ENCODE measurements at regions of chr9 and their contacts with region 1.

Region 1: DNA sequence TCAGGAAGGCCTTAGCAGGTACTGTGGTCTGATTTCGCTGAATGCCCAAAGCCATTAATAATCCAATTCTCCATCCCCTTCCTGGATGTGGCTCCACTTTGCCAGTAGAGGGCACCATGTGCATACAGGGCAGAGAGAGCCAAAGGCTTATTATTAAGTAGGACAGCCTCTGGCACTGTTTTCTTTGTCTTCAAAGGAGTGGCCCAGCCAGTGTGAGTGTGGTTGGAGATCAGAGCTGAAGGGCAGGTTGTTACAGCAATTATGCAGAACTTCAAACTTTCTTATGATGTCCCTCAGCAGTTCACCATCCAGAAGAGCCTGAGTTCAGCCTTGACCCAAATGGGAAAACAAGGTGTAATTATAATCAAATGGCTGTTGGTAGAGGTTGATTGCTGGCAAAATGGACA is 38.6 kb upstream of the CEMIP2 start:
- DNase-seq: peak; percentile 62
- H3K4me3 ChIP-seq: no peak overlapping the region
- H3K27ac ChIP-seq: no peak overlapping the region
- H3K4me1 ChIP-seq: no peaks in the 10 kb centered on the region
- H3K27me3 ChIP-seq: no peaks in the 10 kb centered on the region
- CTCF ChIP-seq: peak; percentile 75 to 87 (median 83)
- EP300 ChIP-seq: no peak
- POLR2A ChIP-seq: no peak

Region 2: GRCh38 chr9:71285191-71285656 is 521.7 kb before region 1 on chr9:
- in situ Hi-C with region 1: loop called in 3 of 4 experiments (anchors 25 kb)
- intact Hi-C with region 1: no loop called
- DNase-seq: peak; percentile 11
- H3K4me3 ChIP-seq: no peak overlapping the region
- H3K27ac ChIP-seq: no peak overlapping the region
- H3K4me1 ChIP-seq: no peaks in the 10 kb centered on the region
- H3K27me3 ChIP-seq: no peaks in the 10 kb centered on the region
- CTCF ChIP-seq: peak; percentile 73 to 84 (median 78)
- EP300 ChIP-seq: no peak
- POLR2A ChIP-seq: no peak

Region 3: DNA sequence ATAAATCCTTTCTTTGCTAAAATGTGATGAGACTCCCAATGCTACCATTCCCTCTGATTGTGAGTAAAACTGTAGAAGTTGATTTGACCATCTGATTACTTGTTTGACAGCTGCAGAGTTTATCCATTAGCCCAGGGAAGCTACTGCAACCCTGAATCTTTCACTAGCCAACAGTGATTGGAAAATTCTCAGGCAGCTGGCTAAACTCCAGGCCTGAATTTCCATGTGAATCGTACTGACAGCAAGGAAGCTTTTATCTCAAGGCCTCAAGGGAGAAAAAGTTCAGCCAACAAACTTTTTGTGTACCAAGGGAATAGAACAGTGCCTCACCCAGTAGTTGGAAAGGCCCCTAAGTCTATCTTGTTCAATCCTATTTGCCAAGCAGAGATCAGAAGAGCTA is 438.7 kb before region 1 on chr9:
- in situ Hi-C with region 1: no loop called
- intact Hi-C with region 1: no loop called
- DNase-seq: peak; percentile 22
- H3K4me3 ChIP-seq: no peak overlapping the region
- H3K27ac ChIP-seq: no peak overlapping the region
- H3K4me1 ChIP-seq: peaks cover 0 to 14% (median 0%) of the 10 kb centered on the region in 4 donors
- H3K27me3 ChIP-seq: no peaks in the 10 kb centered on the region
- CTCF ChIP-seq: no peak
- EP300 ChIP-seq: no peak
- POLR2A ChIP-seq: no peak

Region 4: DNA sequence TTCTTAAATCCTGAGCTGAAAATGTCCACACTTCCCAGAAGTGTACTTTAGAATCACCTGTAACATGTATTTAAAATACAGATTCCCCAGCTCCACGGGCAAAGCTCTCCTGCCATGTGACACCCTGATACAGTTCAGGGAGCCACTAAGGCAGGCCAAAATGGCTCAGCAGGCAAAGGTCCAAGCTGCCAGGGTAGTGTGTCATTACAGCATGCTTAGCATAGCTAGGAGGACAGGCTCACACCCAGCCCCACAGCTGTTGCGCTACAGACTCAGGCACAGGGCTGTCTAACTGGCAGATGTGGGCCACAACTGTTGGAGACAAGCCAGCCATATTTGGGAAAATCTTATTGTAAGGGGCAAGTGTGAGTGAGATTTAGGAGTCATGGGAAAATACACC is 177.5 kb after region 1 on chr9:
- in situ Hi-C with region 1: loop called in 1 of 4 experiments (anchors 25 kb)
- intact Hi-C with region 1: no loop called
- DNase-seq: peak; percentile 25
- H3K4me3 ChIP-seq: no peak overlapping the region
- H3K27ac ChIP-seq: peak overlapping the region; percentile 1 to 73 (median 44)
- H3K4me1 ChIP-seq: peaks cover 0 to 10% (median 5%) of the 10 kb centered on the region in 4 donors
- H3K27me3 ChIP-seq: no peaks in the 10 kb centered on the region
- CTCF ChIP-seq: no peak
- EP300 ChIP-seq: no peak
- POLR2A ChIP-seq: no peak

Region 5: GRCh38 chr9:72022841-72023240 is 215.9 kb after region 1 on chr9:
- in situ Hi-C with region 1: loop called in 1 of 4 experiments (anchors 25 kb)
- intact Hi-C with region 1: loop called (anchors 5 kb)
- DNase-seq: peak; percentile 25
- H3K4me3 ChIP-seq: no peak overlapping the region
- H3K27ac ChIP-seq: no peak overlapping the region
- H3K4me1 ChIP-seq: peaks cover 0 to 7% (median 3%) of the 10 kb centered on the region in 4 donors
- H3K27me3 ChIP-seq: no peaks in the 10 kb centered on the region
- CTCF ChIP-seq: no peak
- EP300 ChIP-seq: no peak
- POLR2A ChIP-seq: no peak

Region 6: DNA sequence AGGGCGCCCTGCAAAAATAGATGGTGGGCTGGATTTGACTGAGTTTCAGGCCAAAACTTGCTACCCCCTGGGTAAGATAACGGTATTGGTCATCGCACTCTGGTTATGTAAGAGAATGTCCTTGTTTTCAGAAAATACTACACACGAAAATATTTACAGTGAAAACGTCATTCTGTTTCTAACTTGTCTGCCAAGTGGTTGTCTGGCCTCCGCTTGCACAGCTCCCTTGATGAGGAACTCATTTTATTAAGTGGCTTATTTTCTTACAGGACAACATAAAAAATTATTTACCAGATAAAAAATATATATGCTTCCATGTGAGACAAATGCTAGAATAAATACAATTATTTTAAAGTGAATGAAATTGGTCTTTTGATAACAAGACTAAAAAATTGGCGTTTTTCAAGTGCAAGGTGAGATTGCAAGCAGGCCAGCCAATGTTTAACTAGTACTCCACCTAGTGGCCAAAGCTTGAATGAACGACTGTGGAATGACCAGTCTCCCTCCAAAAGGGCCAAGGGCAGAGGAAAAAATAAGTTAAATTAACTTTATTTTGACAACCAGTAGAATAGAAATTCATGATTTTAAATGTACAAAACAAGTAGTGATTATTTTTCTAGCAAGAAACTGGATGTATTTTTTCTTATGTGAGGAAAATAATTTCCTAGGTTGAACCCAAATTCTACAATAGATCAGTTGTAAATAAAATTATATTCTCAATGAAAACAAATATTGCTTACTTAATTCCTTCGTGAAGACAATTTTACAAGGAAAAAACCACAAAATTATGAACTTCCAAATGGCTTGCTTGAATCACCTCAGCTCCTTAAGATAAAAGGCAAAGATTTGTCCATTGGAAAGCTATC is 464.9 kb after region 1 on chr9:
- in situ Hi-C with region 1: loop called (anchors 10 to 25 kb)
- intact Hi-C with region 1: no loop called
- DNase-seq: peak; percentile 47
- H3K4me3 ChIP-seq: no peak overlapping the region
- H3K27ac ChIP-seq: no peak overlapping the region
- H3K4me1 ChIP-seq: no peaks in the 10 kb centered on the region
- H3K27me3 ChIP-seq: no peaks in the 10 kb centered on the region
- CTCF ChIP-seq: peak; percentile 81 to 89 (median 87)
- EP300 ChIP-seq: no peak
- POLR2A ChIP-seq: no peak

Measured in transverse colon (tissue), 4 donors.